Thyroid gland (tissue), 4 donors: ENCODE measurements at regions of chr14 and their contacts with region 1.

Region 1: DNA sequence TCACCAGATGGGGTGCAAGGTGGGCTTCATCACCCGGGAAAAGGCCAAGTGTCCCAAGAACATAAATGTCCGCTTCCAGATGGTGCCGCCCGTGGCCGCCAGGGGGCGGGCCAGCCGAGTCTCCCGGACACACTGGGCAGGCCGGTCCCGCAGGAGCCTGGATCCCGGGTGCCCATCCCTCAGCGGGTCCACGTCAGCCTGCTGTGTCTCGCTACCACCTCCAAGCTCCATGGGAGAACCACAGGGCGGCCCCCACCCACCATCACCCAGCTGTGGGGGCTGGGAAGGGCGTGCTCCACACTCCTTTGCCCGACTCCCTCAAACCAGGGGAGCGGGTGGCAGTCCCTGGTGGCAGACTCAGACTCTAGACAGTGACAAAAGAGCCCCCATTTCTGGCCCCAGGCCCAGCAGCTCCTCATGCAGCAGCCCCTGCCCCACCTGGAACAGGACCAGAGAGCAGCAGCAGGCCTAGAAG is 22.0 kb upstream of the NUDT14 start:
- DNase-seq: peak; percentile 82 to 85
- H3K4me3 ChIP-seq: no peak overlapping the region
- H3K27ac ChIP-seq: no peak overlapping the region
- H3K4me1 ChIP-seq: peaks cover 22 to 53% of the 10 kb centered on the region in 2 donors
- H3K27me3 ChIP-seq: no peaks in the 10 kb centered on the region
- CTCF ChIP-seq: peak; percentile 79 to 92 (median 86)
- POLR2A ChIP-seq: peak in 1 of 2 donors; percentile 1

Region 2: DNA sequence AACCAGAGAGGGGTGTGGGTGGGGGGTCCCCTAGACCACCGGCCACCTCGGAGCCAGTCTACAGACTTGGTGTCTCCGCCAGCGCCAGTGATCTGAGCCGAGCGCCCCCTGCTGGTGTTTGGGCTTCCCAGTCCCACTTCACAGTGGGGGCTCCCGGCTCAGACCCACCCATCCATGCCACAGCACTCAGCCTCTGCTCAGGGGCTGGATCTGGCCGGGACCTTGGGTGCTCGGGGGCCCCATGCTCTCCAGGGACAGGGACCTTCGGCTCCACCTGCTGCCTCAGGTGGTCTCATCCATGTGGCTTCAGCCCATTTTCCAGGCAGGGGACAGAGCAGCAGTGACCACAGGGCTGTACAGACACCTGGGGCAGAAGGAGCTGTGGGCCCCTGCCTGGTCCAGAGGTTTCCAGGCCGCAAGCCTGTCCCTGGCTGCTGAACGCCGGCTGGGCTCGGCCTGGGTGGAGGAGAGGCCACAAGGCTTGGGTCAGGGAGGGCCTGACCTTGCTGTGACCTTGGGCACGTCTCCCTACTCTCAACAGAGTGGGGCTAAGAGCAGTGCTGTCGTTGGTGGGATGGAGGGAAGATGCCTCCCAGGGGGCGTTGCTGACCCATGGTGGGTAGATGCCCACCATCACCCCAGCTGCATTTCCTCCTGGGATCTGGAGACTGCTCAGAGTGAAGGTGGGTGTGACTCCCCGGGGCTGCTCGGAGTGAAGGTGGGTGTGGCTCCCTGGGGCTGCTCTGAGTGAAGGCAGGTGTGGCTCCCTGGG is 978.4 kb before region 1 on chr14:
- intact Hi-C with region 1: no loop called
- DNase-seq: no peak
- H3K4me3 ChIP-seq: no peak overlapping the region
- H3K27ac ChIP-seq: no peak overlapping the region
- H3K4me1 ChIP-seq: no peaks in the 10 kb centered on the region
- H3K27me3 ChIP-seq: no peaks in the 10 kb centered on the region
- CTCF ChIP-seq: peak in 2 of 6 experiments; percentile 8 to 32
- POLR2A ChIP-seq: no peak

Region 3: DNA sequence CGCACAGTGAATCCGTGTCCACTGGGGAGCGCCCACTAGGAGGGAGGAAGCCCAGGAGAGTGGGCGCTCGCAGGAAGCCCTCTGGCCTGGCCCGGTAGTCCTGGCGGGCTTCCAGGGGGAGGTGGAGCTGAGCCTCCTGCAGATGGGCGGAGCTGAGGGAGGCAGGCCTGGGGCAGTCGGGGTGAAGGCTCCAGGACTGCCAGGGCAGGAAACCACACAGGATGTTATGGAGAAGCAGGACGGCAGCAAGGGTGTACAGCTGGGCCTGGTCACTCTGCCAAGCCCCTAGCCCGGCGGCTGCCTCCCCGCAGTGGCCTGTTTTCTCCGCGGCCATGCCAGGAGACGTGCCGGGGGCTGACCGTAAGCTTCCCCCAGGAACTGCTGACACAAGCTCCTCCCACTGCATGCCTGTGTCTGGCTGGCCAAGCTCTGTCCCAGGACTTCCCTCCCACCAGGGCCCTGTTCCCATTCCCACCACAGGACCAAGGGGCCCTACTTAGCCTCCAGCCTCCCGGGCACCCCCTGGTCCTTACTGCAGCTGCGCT is 767.0 kb before region 1 on chr14:
- intact Hi-C with region 1: no loop called
- DNase-seq: peak; percentile 27 to 29
- H3K4me3 ChIP-seq: no peak overlapping the region
- H3K27ac ChIP-seq: peak overlapping the region in 2 of 3 donors; percentile 17 to 36
- H3K4me1 ChIP-seq: peaks cover 3 to 18% of the 10 kb centered on the region in 2 donors
- H3K27me3 ChIP-seq: no peaks in the 10 kb centered on the region
- CTCF ChIP-seq: no peak
- POLR2A ChIP-seq: no peak

Region 4: GRCh38 chr14:105281371-105282097 is 78.4 kb after region 1 on chr14:
- intact Hi-C with region 1: loop called (anchors 5 kb)
- DNase-seq: peak; percentile 31 to 41
- H3K4me3 ChIP-seq: no peak overlapping the region
- H3K27ac ChIP-seq: no peak overlapping the region
- H3K4me1 ChIP-seq: peaks cover 4 to 5% of the 10 kb centered on the region in 2 donors
- H3K27me3 ChIP-seq: no peaks in the 10 kb centered on the region
- CTCF ChIP-seq: peak; percentile 25 to 74 (median 58)
- POLR2A ChIP-seq: no peak

Region 5: GRCh38 chr14:105351920-105352851 is 149.1 kb after region 1 on chr14:
- intact Hi-C with region 1: loop called (anchors 2 kb)
- DNase-seq: peak; percentile 90 to 92
- H3K4me3 ChIP-seq: no peak overlapping the region
- H3K27ac ChIP-seq: peak overlapping the region; percentile 2 to 49 (median 30)
- H3K4me1 ChIP-seq: peaks cover 0 to 7% of the 10 kb centered on the region in 2 donors
- H3K27me3 ChIP-seq: no peaks in the 10 kb centered on the region
- CTCF ChIP-seq: peak; percentile 63 to 94 (median 92)
- POLR2A ChIP-seq: no peak